Activated CD8-positive, alpha-beta T cell treated with anti-CD3 and anti-CD28 coated beads, Interleukin-2, amount 10 ng/mL, durations not matched to agents 7 days and 5 days (primary cell): ENCODE measurements at regions of chr12 and their contacts with region 1.

Region 1: DNA sequence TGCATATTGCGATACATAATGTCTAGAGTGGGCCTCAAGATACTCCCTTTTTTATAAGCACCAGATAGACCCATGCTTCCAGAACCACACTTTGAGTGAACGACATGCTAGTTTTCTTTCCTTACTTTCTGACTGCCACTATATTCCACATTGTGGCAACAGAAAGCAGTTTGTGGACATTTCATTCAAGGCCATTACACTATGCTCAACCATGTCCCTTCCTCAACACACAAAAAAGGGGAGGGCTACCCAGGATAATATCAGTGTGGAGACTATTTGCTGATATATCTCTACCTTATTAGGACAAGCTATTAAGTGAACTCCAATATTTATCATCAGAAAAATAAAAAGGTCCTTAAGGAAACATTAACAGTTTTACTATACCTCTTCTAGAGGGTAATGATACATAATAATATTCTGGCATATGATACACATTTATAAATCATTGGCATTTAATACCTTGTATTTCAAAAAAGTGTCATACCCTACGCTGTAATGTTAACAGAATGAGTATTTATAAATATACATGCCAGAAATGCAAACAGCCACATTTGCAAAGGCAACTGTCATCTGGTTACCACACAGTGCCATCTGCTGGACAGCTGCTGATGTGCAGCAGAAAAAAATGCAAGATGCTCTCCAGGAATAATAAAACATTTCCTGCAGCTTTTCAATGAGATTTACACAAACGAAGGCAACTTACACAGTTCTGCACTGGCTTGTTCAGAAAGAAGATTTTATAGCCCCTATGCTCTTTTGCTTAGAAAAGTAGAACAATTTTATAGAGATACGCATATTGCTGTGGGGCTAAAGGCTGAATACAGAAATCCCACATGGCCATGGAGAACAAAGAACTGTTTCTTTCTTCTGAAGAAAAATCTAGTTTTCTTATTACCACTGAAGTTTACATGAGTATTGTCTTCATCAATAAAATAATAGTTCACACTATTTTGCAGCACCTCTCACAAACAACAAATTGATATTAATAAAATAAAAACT is 182.2 kb upstream of the GRIP1 start:
- DNase-seq: peak; percentile 78
- ATAC-seq: peak; percentile 30
- H3K4me3 Mint-ChIP-seq: no peak overlapping the region
- H3K27ac Mint-ChIP-seq: no peak overlapping the region
- H3K4me1 Mint-ChIP-seq: peaks cover 24% of the 10 kb centered on the region
- H3K27me3 Mint-ChIP-seq: peaks cover 18% of the 10 kb centered on the region

Region 2: GRCh38 chr12:66708704-66709456 is 152.2 kb before region 1 on chr12:
- CTCF ChIA-PET with region 1: interaction called, 12 read pairs
- POLR2A ChIA-PET with region 1: no interaction called
- DNase-seq: no peak
- ATAC-seq: peak; percentile 64
- H3K4me3 Mint-ChIP-seq: peak overlapping the region; percentile 37
- H3K27ac Mint-ChIP-seq: peak overlapping the region; percentile 78
- H3K4me1 Mint-ChIP-seq: peaks cover 29% of the 10 kb centered on the region
- H3K27me3 Mint-ChIP-seq: peaks cover 2% of the 10 kb centered on the region

Region 3: DNA sequence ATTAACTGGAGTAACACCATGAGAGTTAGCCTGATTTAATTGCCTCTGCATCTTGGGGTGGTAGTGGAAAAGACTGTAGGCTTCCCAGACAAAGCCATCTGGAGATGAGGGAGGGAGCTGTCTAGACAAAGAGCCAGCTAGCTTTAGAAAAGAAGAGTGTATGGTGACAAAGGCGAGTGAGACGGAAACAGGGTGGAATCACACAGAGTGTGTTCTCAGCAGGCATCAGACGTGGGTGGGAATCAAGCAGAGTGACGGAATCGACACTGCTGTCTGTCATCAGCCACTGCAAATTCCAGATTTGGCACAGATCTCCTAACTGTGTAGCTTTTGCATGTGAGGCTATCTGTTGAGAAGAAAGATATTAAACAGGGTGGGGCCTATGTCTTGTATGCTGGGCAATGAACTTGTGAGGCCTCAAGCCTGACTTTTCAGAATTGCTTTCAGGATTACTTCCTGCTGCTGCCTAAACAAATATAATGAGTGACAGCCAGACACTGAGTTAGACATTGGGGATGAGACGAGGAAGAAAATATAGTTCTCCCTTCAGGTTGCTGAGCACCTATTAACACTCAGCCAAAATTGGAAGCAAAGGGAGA is 54.4 kb after region 1 on chr12:
- CTCF ChIA-PET with region 1: no interaction called
- POLR2A ChIA-PET with region 1: no interaction called
- DNase-seq: no peak
- ATAC-seq: no peak
- H3K4me3 Mint-ChIP-seq: no peak overlapping the region
- H3K27ac Mint-ChIP-seq: no peak overlapping the region
- H3K4me1 Mint-ChIP-seq: peaks cover 6% of the 10 kb centered on the region
- H3K27me3 Mint-ChIP-seq: peaks cover 6% of the 10 kb centered on the region

Region 4: GRCh38 chr12:67096533-67097318 is 235.7 kb after region 1 on chr12:
- CTCF ChIA-PET with region 1: no interaction called
- POLR2A ChIA-PET with region 1: no interaction called
- DNase-seq: no peak
- ATAC-seq: no peak
- H3K4me3 Mint-ChIP-seq: no peak overlapping the region
- H3K27ac Mint-ChIP-seq: no peak overlapping the region
- H3K4me1 Mint-ChIP-seq: no peaks in the 10 kb centered on the region
- H3K27me3 Mint-ChIP-seq: peaks cover 2% of the 10 kb centered on the region